Naive thymus-derived CD4-positive, alpha-beta T cell (primary cell): ENCODE measurements at regions of chr11 and their contacts with region 1.

Region 1: DNA sequence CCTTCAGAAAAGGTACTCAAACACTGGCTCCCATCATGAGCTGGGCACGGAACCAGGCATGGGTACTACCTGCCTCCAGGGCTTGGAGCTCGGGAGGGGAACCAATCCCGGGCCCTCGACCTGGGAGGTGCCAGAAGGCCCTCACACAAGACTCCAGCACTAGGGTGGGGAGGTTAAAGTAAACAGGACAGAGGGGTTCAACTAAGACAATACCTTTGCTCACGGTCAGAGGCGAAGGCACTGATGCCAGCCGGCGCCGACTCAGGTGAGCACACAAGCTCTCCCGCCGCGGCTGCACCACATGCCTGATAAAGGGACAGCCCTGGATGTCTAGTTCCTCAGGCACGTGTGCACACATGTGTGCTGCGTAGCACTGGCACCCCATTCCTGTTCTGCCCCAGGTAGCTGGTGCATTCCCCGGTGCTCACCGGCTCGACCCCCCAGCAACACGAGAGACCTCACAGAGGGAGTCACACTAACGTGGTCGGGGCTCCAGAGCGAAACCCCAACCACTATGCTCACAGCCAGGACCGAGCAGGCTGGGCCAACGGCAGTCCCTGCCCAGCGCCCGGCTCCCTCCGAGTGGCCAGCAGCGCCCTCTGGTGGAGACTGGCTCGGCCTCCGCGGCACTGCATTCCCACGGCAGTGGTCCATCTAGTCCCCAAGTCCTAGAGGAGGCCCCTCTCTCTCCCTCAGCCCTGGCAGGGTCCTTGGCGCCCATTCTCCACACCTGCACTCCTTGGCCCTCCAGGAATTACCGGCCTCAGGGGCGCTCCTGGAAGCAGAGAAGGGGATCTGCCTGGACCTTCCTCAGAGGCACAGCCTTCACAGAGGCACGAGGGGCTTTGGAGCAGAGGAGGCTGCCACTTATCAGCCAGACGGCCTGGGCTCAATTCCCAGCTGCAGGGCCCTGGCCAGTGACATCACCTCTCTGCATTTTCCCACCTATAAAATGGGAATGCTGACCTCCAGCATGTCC is 28.8 kb upstream of the MOB2 start:
- DNase-seq: peak; percentile 37 to 79 (median 61)
- ATAC-seq: peak; percentile 86
- H3K4me3 ChIP-seq: no peak overlapping the region
- H3K4me3 Mint-ChIP-seq: peak overlapping the region in 4 of 10 donors; percentile 14 to 41 (median 34)
- H3K27ac ChIP-seq: no peak overlapping the region
- H3K27ac Mint-ChIP-seq: peak overlapping the region in 3 of 9 donors; percentile 28 to 59 (median 28)
- H3K4me1 ChIP-seq: peaks cover 19 to 20% of the 10 kb centered on the region in 2 donors
- H3K4me1 Mint-ChIP-seq: peaks cover 9 to 88% (median 67%) of the 10 kb centered on the region in 7 donors
- H3K27me3 ChIP-seq: no peaks in the 10 kb centered on the region
- H3K27me3 Mint-ChIP-seq: no peaks in the 10 kb centered on the region

Region 2: GRCh38 chr11:1113405-1114201 is 401.8 kb before region 1 on chr11:
- CTCF ChIA-PET with region 1: no interaction called
- POLR2A ChIA-PET with region 1: no interaction called
- intact Hi-C with region 1: loop called in 1 of 2 experiments (anchors 10 kb)
- DNase-seq: no peak
- ATAC-seq: no peak
- H3K4me3 ChIP-seq: no peak overlapping the region
- H3K4me3 Mint-ChIP-seq: no peak overlapping the region
- H3K27ac ChIP-seq: no peak overlapping the region
- H3K27ac Mint-ChIP-seq: no peak overlapping the region
- H3K4me1 ChIP-seq: no peaks in the 10 kb centered on the region
- H3K4me1 Mint-ChIP-seq: peaks cover 0 to 6% (median 0%) of the 10 kb centered on the region in 7 donors
- H3K27me3 ChIP-seq: no peaks in the 10 kb centered on the region
- H3K27me3 Mint-ChIP-seq: no peaks in the 10 kb centered on the region

Region 3: GRCh38 chr11:1202776-1203504 is 312.4 kb before region 1 on chr11:
- CTCF ChIA-PET with region 1: interaction called, 4 read pairs
- POLR2A ChIA-PET with region 1: no interaction called
- intact Hi-C with region 1: loop called in 1 of 2 experiments (anchors 1 kb)
- DNase-seq: peak in 8 of 9 donors; percentile 34 to 73 (median 60)
- ATAC-seq: peak; percentile 83
- H3K4me3 ChIP-seq: no peak overlapping the region
- H3K4me3 Mint-ChIP-seq: no peak overlapping the region
- H3K27ac ChIP-seq: no peak overlapping the region
- H3K27ac Mint-ChIP-seq: no peak overlapping the region
- H3K4me1 ChIP-seq: no peaks in the 10 kb centered on the region
- H3K4me1 Mint-ChIP-seq: no peaks in the 10 kb centered on the region
- H3K27me3 ChIP-seq: no peaks in the 10 kb centered on the region
- H3K27me3 Mint-ChIP-seq: no peaks in the 10 kb centered on the region

Region 4: DNA sequence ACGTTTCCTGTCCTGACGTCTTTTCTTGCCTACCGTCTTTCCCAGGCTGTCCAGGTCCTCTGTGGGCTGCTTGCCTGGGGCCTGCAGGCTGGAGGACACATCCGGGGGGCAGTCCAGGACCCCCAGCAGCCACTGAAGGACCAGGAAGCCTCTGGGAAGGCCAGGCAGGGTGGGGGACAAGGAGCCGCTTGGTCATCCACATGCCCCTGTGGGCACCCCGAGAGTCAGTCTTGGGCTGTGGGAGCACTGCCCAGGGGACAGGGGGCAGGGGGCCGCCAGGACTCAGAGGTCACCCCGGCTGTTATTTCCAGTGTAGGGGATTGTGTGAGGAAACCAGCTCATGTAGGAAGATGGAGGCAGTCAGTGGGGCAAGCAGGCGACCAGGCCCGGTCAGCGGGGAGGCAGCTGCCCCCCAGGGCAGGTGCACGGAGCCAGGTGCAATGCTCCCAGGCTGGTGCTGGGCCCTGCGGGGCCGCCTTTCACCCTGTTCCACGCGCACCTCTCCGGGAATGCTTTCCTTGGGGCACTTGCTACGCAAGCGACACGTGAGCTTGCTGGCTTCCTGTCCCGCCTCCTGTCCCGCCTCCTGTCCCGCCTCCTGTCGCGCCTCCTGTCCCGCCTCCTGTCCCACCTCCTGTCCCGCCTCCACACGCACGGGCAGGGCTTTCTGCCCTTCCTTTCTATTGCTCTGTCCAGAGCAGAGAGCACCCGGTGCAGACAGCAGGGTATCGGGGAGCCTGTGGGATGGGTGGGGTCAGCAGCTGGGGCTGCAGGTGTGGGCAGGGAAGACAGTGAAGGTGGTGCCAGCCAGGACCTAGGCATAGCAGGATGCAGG is 253.0 kb before region 1 on chr11:
- CTCF ChIA-PET with region 1: no interaction called
- POLR2A ChIA-PET with region 1: no interaction called
- intact Hi-C with region 1: loop called (anchors 1 to 5 kb)
- DNase-seq: peak; percentile 72 to 91 (median 84)
- ATAC-seq: peak; percentile 93
- H3K4me3 ChIP-seq: peak overlapping the region; percentile 77
- H3K4me3 Mint-ChIP-seq: peak overlapping the region; percentile 74 to 90 (median 85)
- H3K27ac ChIP-seq: peak overlapping the region; percentile 89
- H3K27ac Mint-ChIP-seq: peak overlapping the region; percentile 78 to 95 (median 91)
- H3K4me1 ChIP-seq: peaks cover 13 to 15% of the 10 kb centered on the region in 2 donors
- H3K4me1 Mint-ChIP-seq: peaks cover 0 to 34% (median 12%) of the 10 kb centered on the region in 7 donors
- H3K27me3 ChIP-seq: no peaks in the 10 kb centered on the region
- H3K27me3 Mint-ChIP-seq: no peaks in the 10 kb centered on the region

Region 5: DNA sequence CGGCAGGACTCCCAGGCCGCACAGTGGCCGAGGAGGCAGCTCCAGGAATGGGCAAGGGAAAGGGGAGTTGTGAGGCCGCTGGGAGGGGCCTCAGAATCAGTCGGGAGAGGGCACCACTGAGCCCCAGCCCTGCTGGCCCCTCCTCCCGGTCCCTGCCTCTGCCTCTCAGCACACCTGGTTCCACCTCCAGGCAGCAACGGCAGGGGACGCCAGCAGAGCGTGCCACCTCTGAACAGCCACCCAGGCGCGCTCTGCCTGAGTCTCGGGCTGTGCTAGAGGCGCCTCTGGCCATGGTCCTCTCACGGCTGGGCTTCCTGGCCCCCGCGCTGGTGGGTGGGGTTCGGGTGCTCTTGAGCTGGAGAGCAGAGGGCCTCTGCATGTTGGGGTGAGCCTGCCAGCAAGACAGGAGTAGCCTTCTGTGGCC is 61.7 kb before region 1 on chr11:
- CTCF ChIA-PET with region 1: interaction called, 3 read pairs
- POLR2A ChIA-PET with region 1: no interaction called
- intact Hi-C with region 1: loop called in 1 of 2 experiments (anchors 5 kb)
- DNase-seq: peak in 7 of 9 donors; percentile 12 to 52 (median 34)
- ATAC-seq: peak; percentile 45
- H3K4me3 ChIP-seq: no peak overlapping the region
- H3K4me3 Mint-ChIP-seq: no peak overlapping the region
- H3K27ac ChIP-seq: no peak overlapping the region
- H3K27ac Mint-ChIP-seq: no peak overlapping the region
- H3K4me1 ChIP-seq: no peaks in the 10 kb centered on the region
- H3K4me1 Mint-ChIP-seq: peaks cover 0 to 1% (median 0%) of the 10 kb centered on the region in 7 donors
- H3K27me3 ChIP-seq: no peaks in the 10 kb centered on the region
- H3K27me3 Mint-ChIP-seq: no peaks in the 10 kb centered on the region

Region 6: GRCh38 chr11:1652771-1653540 is 137.6 kb after region 1 on chr11:
- CTCF ChIA-PET with region 1: no interaction called
- POLR2A ChIA-PET with region 1: no interaction called
- intact Hi-C with region 1: no loop called
- DNase-seq: peak; percentile 54 to 87 (median 78)
- ATAC-seq: peak; percentile 93
- H3K4me3 ChIP-seq: no peak overlapping the region
- H3K4me3 Mint-ChIP-seq: no peak overlapping the region
- H3K27ac ChIP-seq: no peak overlapping the region
- H3K27ac Mint-ChIP-seq: no peak overlapping the region
- H3K4me1 ChIP-seq: no peaks in the 10 kb centered on the region
- H3K4me1 Mint-ChIP-seq: peaks cover 0 to 4% (median 0%) of the 10 kb centered on the region in 7 donors
- H3K27me3 ChIP-seq: no peaks in the 10 kb centered on the region
- H3K27me3 Mint-ChIP-seq: peaks cover 0 to 19% (median 16%) of the 10 kb centered on the region in 5 donors